PC-3 (cell line): ENCODE measurements at regions of chr19 and their contacts with region 1.

Region 1: DNA sequence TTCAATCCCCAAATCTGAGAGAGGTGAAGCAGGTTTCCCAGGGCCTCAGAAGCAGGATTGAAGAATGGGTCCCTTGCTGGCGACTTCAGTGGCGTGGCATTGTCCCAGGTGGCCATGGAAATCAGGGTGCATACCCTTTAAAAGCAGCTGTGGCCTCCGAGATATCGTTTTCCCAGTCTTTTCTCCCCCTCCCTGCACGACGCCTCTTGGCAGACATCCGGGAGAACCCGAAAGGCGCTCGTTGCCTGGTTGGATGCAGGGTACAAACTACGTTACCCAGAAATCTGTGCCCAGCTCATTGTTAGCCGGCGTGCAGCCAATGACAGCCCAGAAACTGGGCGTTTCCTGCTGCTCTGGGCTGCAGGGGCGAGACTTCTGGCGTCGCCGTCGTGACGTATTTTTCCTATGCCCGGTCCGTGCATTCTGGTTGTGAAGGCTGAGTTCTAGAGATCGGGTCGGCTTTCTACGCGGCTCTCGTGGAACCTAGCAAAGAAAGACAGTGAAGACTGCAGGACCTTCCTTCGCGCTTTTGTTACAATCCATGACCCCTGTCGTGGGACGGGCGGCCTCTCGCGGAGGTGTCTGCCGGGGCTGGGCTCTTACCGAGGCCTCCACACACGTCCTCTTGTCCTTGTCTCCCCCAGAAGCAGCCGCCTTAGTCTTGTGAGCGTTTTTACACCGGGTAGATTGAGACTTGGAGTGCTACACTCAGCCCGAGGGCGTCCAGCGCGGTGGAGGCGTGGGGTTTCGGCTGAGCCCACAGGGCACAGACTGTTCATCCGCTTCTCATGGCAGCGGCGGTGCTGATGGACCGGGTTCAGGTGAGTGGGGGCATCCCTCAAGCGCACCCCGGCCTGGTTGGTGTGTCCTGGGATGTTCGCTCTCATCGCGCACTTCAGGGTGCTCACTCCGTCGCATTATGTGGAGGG is at the start of gene ZNF304:
- DNase-seq: peak; percentile 99
- ATAC-seq: peak; percentile 99
- H3K4me3 ChIP-seq: peak within 1 kb of the TSS; percentile 91
- H3K27ac ChIP-seq: no peak within 1 kb of the TSS
- H3K4me1 ChIP-seq: peaks cover 20% of the 10 kb centered on the region
- H3K27me3 ChIP-seq: no peaks in the 10 kb centered on the region
- CTCF ChIP-seq: no peak
- total RNA-seq, gene ZNF304: 8.1 and 8.2 TPM in 2 replicates

Region 2: DNA sequence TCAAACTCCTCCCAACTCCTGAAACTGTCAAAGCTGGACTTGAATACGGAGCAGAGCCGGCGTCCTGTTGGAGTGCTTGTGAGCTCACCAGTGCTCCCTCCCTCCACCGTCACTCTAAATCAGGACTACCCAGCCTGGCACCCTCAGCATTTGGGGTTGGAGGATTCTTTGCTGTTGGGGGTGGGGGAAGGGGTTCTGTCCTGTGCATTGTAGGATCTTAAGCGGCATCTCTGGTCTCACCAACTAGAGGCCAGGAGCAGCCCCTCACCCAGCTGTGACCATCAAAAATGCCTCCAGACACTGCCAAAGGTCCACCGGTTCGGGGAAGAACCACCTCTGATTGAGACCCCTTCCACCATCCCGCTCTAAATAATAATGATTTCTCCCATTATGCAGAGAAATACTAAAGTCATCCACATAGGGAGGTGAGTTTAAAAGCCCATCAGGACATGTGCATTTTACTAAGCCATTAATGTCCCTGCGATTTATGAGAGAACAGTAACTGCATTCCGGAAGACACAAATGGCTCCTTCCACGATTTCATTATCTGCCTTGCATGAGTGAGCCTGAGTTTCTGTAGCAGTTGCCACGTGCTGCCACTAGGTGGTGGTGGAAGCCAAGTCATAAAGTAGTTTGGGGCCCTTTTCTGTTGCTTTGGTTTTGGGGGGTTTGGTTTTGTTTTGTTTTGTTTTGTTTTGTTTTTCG is 247.4 kb before region 1 on chr19:
- CTCF ChIA-PET with region 1: no interaction called
- POLR2A ChIA-PET with region 1: no interaction called
- intact Hi-C with region 1: loop called (anchors 1 kb)
- DNase-seq: peak; percentile 85
- ATAC-seq: peak; percentile 87
- H3K4me3 ChIP-seq: peak overlapping the region; percentile 62
- H3K27ac ChIP-seq: no peak overlapping the region
- H3K4me1 ChIP-seq: no peaks in the 10 kb centered on the region
- H3K27me3 ChIP-seq: no peaks in the 10 kb centered on the region
- CTCF ChIP-seq: peak; percentile 96

Region 3: DNA sequence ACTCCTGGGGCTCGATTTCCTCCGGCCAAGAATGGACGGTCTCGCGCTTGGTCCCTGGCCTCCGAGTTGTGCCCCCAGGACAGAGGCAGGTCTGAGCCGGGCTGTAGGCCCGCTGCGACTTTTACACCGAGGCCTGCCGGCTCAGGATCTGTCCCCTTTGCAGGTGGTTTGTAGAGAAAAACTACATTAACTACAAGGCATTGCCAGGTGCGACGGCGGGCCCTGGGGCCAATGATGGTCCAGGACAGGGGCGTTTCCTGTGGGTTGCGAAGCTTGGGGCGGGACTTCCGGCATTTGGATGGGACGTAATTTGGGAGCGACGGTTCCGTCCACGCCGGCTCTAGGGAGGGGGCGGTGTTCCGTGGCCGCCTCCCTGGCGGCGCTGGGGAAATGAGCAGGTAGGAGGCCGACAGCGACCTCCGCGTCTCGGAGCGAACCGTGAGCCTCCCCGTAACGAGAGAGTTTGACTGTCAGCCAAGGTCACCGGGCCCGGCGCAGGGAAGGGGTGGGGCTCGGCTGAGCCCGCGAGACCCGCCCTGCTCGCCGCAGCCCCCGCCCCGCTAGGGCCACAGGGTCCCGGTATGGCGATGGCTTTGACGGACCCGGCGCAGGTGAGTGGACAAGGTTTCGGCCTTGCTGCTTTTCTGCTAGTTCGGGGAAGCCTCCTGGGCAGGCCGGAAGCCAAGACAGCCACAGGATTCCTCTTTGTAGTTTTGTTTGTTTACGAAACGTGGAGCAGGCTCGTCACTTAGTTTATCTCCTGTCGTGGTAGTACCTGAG is 110.6 kb before region 1 on chr19 and contains the start of gene ZNF805:
- CTCF ChIA-PET with region 1: no interaction called
- POLR2A ChIA-PET with region 1: interaction called, 3 read pairs
- intact Hi-C with region 1: loop called (anchors 1 kb)
- DNase-seq: peak; percentile 97
- ATAC-seq: peak; percentile 98
- H3K4me3 ChIP-seq: peak within 1 kb of the TSS; percentile 77
- H3K27ac ChIP-seq: peak within 1 kb of the TSS; percentile 64
- H3K4me1 ChIP-seq: peaks cover 17% of the 10 kb centered on the region
- H3K27me3 ChIP-seq: no peaks in the 10 kb centered on the region
- CTCF ChIP-seq: peak; percentile 25; the same call in 1 of the 2 replicates
- total RNA-seq, gene ZNF805: 12.9 and 13.1 TPM in 2 replicates

Region 4: DNA sequence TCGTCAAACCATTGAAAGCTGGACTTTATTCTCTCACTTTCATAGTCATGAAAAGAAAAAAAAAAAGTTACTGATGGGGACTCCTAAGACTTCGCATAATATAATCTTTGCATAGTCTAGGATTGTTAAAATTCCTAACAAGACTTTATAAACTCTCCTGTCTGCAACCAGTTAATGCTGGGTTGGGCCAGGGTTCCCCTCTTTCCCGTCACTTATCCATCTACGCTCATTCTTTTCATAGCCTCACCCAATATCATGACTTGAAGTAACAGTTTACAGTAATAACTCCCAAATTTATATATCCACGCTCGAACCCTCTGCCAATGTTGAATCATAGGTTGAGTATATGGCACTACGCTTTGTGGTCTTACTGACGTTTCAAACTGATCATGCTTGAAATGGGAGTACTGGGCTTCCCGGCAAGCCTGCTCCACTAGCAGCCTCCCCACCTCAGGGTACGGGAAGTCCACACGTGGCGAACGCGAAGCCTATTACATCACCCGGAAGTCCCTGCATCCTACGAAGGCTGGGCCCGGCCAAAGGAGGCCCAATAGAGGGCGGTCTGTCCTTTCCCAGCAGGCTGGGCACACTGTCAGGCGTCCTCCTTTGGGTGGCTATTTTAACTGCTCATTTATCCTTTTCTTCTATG is 71.6 kb before region 1 on chr19:
- CTCF ChIA-PET with region 1: interaction called, 3 read pairs
- POLR2A ChIA-PET with region 1: no interaction called
- intact Hi-C with region 1: loop called (anchors 1 kb)
- DNase-seq: peak; percentile 93
- ATAC-seq: peak; percentile 84
- H3K4me3 ChIP-seq: peak overlapping the region; percentile 100
- H3K27ac ChIP-seq: peak overlapping the region; percentile 90
- H3K4me1 ChIP-seq: peaks cover 50% of the 10 kb centered on the region
- H3K27me3 ChIP-seq: no peaks in the 10 kb centered on the region
- CTCF ChIP-seq: peak; percentile 58

Region 5: GRCh38 chr19:57362997-57363705 is 12.0 kb after region 1 on chr19 and contains the starts of genes TRAPPC2B and ZNF547:
- CTCF ChIA-PET with region 1: no interaction called
- POLR2A ChIA-PET with region 1: no interaction called
- intact Hi-C with region 1: loop called (anchors 1 kb)
- DNase-seq: peak; percentile 99
- ATAC-seq: peak; percentile 99
- H3K4me3 ChIP-seq: peak within 1 kb of the TSS; percentile 80
- H3K27ac ChIP-seq: peak within 1 kb of the TSS; percentile 32
- H3K4me1 ChIP-seq: peaks cover 13% of the 10 kb centered on the region
- H3K27me3 ChIP-seq: no peaks in the 10 kb centered on the region
- CTCF ChIP-seq: no peak
- total RNA-seq, gene TRAPPC2B: 16.1 and 21.0 TPM in 2 replicates
- total RNA-seq, gene ZNF547: 0.81 and 3.2 TPM in 2 replicates

Region 6: DNA sequence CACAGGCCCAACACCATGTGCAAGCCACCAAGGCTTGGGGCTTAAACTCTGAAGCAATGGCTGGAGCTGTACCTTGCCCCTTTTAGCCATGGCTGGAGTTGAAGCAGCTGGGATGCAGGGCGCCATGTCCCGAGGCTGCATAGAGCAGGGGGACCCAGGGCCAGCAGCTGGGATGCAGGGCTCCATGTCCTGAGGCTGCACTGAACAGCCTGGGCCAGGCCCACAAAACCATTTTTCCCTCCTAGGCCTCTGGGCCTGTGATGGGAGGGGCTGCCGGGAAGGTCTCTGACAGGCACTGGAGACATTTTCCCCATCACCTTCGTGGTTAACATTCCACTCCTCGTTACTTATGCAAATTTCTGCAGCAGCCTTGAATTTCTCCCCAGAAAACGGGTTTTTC is 23.0 kb after region 1 on chr19:
- CTCF ChIA-PET with region 1: no interaction called
- POLR2A ChIA-PET with region 1: no interaction called
- intact Hi-C with region 1: no loop called
- DNase-seq: no peak
- ATAC-seq: no peak
- H3K4me3 ChIP-seq: no peak overlapping the region
- H3K27ac ChIP-seq: no peak overlapping the region
- H3K4me1 ChIP-seq: no peaks in the 10 kb centered on the region
- H3K27me3 ChIP-seq: no peaks in the 10 kb centered on the region
- CTCF ChIP-seq: no peak

Region 7: GRCh38 chr19:57435062-57435978 is 84.2 kb after region 1 on chr19 and contains the start of gene ZNF749:
- CTCF ChIA-PET with region 1: no interaction called
- POLR2A ChIA-PET with region 1: no interaction called
- intact Hi-C with region 1: no loop called
- DNase-seq: peak; percentile 100
- ATAC-seq: peak; percentile 96
- H3K4me3 ChIP-seq: peak within 1 kb of the TSS; percentile 88
- H3K27ac ChIP-seq: peak within 1 kb of the TSS; percentile 34
- H3K4me1 ChIP-seq: peaks cover 14% of the 10 kb centered on the region
- H3K27me3 ChIP-seq: no peaks in the 10 kb centered on the region
- CTCF ChIP-seq: no peak
- total RNA-seq, gene ZNF749: 17.6 and 21.9 TPM in 2 replicates